Mammary epithelial cell (primary cell): ENCODE measurements at regions of chr16 and their contacts with region 1.

Region 1: GRCh38 chr16:19094541-19095365 is 19.0 kb upstream of the ITPRIPL2 start:
- DNase-seq: no peak
- H3K4me3 ChIP-seq: no peak overlapping the region
- H3K27ac ChIP-seq: no peak overlapping the region
- H3K4me1 ChIP-seq: peaks cover 7% of the 10 kb centered on the region
- H3K27me3 ChIP-seq: no peaks in the 10 kb centered on the region
- CTCF ChIP-seq: peak in 1 of 2 donors; percentile 5

Region 2: DNA sequence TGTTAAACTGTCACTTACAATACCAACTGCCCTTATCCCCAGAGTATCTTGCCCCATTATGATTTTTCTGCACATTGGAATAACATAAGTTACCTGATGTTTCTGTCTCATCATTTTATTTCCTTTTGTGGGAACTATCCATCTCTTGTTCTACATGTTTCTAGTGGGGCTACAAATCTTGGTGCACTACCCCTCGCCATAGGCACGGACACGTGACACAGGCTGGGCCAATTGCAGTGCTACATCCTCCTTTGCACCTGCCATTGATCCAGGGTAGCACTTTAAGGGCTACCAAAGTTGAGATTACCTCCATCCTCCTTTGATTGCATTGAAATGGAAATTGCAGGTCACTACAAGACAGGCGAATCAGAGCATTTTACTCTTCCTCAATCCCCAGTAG is 59.1 kb after region 1 on chr16:
- CTCF ChIA-PET with region 1: no interaction called
- dilution Hi-C with region 1: no loop called
- in situ Hi-C with region 1: no loop called
- intact Hi-C with region 1: no loop called
- DNase-seq: no peak
- H3K4me3 ChIP-seq: no peak overlapping the region
- H3K27ac ChIP-seq: no peak overlapping the region
- H3K4me1 ChIP-seq: no peaks in the 10 kb centered on the region
- H3K27me3 ChIP-seq: no peaks in the 10 kb centered on the region
- CTCF ChIP-seq: no peak

Region 3: DNA sequence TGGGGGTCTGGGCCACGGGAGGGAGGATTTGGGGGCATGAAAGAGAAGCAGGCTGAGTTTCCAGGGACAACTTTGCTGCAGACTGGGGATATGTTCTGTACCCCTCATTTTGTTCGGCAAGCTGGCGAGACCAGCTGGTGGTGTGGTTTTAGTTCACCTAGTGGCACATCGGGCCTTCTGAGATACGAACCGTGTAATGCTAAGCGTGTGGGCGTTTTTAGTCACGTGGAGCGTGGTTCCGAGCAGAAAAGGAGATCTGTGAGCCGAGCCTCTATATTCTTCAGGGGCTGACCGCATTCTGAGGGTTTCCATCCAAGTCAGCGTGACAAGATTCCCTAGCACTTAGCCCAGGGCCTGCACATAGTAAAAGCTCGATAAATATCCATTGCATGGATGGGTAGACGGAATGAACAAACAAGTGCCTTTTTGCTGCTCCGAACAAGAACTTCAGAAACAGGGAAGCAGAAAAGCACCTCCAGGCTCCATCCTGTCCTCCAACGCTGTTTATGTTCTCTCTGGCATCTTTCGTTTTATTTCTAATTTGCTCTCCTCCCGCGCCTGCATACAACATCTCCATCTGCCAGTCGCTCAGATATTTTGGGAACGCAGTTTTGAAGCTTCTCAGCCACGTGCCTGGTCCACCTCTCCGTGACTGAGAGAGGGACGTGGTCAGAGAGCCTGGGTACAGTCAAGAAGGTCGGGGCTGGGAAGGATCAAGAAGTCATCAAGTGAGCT is 79.1 kb after region 1 on chr16:
- CTCF ChIA-PET with region 1: no interaction called
- dilution Hi-C with region 1: no loop called
- in situ Hi-C with region 1: loop called (anchors 5 to 10 kb)
- intact Hi-C with region 1: loop called (anchors 5 kb)
- DNase-seq: no peak
- H3K4me3 ChIP-seq: no peak overlapping the region
- H3K27ac ChIP-seq: no peak overlapping the region
- H3K4me1 ChIP-seq: no peaks in the 10 kb centered on the region
- H3K27me3 ChIP-seq: peaks cover 4% of the 10 kb centered on the region
- CTCF ChIP-seq: no peak

Region 4: DNA sequence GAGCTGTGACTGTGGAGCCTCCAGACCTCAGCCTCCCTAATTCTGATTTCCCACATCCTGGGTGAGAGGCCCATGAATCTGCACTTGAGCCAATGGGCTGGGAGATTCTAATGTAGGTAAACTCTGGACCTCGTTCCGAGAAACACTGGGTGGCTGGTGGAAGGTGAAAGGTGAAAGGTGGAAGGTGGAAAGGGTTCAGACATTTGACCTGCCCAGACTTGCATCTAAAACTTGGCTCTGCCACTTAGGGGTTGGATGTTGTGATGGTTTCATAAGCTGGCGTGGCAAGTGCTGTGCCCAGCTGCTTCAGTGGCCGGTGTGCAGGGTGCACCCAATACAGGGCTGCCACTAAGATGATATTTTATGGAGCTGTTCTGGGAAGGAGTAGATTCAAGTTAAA is 98.1 kb after region 1 on chr16:
- CTCF ChIA-PET with region 1: no interaction called
- dilution Hi-C with region 1: no loop called
- in situ Hi-C with region 1: no loop called
- intact Hi-C with region 1: no loop called
- DNase-seq: no peak
- H3K4me3 ChIP-seq: no peak overlapping the region
- H3K27ac ChIP-seq: no peak overlapping the region
- H3K4me1 ChIP-seq: no peaks in the 10 kb centered on the region
- H3K27me3 ChIP-seq: no peaks in the 10 kb centered on the region
- CTCF ChIP-seq: no peak